KBM-7 (cell line): ENCODE measurements at regions of chr5 and their contacts with region 1.

Region 1: DNA sequence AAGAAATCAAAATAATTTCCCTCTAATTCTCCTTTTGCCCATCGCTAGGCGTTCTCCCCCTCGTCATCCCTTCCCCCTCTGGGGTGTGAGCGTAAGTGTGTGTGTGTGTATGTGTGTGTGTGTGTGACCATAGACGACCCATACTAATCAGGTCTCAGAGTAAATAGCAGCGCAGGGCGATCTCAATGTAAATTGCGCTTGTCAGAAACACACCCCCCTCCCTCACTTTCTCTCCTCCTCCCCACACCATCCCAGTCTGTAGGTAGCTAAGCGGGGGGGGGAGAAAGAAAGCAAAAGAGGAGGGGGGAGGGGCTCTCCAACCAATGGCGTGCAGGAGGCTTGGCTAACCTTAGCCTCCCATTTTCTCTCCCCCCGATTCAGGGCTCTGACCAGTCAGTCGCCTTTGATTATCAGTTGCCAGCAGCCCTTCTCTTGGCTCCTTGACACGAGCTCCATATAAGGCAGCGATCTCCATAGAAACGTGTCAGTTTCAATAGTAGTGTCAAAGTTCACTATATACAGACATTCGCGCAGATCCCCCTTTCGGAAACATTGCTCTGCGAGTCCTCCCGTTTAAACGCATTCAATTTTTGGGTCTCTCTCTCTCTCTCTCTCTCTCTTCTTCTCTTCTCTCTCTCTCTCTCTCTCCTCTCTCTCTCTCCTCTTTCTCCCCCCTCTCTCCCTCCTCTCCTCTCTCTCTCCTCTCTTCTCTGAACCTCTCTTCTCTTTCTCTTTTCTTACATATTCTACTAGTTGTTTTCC is at the start of gene NR2F1:
- DNase-seq: peak; percentile 91

Region 2: DNA sequence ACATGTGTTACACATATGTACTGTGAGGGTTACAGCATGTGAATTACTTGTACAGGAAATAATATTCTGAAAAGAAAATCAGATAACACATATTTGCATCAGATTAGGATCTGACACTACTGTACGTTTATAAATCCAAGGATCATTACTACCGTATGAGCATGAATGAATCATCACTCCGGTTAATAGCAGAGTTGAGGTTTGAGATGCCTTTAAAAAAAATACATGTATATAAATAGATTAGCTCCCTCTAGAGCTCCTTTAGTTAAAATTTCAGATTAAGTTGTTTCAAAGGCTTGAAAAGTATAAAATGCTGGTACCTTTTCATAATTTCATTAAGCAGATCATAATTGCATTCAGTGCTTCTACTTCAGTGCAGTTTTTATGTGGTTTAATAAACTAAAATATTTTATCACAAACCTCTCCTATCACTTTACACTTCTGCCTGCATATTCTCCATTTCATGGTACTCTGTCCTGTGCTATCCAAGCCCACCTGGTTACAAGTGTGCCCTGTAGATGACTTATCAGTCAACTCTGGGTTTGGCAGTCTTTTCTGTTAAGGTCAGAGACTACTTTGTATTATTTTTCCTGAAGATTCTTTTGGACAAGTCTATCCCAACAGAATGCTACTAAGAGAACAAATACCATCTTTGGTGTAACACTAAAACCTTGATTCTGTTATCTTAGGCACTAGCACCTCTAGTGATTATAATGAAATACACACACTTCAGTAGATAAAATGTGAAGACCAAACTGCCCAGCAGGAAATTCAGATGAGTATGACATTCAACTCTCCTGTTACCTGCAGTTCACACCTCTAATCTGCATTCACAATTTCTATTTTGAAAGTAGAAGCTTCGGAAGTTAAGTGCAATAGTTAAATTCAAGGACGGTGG is 206.6 kb after region 1 on chr5:
- in situ Hi-C with region 1: loop called (anchors 25 kb)
- DNase-seq: no peak

Region 3: DNA sequence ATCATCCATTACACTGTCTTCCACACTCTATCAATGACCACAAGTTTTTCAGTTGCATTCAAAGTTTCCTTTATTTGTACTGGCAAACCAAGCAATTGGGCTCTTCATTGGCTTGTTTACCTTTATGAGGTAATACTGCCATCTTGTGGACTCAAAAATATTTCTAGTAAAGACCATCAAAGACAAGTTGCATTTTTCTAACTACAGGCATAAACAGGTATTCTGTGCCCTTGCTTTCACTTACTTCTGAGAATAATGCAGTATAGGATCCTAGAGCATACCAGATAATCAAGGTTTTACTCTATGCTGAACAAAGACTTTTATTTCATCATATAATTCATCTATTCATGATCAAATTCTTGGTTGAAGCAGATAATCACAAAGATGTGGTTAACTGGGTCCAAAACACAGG is 332.3 kb after region 1 on chr5:
- in situ Hi-C with region 1: loop called (anchors 25 kb)
- DNase-seq: peak; percentile 63

Region 4: GRCh38 chr5:93967923-93968322 is 385.1 kb after region 1 on chr5:
- in situ Hi-C with region 1: no loop called
- DNase-seq: no peak

Region 5: DNA sequence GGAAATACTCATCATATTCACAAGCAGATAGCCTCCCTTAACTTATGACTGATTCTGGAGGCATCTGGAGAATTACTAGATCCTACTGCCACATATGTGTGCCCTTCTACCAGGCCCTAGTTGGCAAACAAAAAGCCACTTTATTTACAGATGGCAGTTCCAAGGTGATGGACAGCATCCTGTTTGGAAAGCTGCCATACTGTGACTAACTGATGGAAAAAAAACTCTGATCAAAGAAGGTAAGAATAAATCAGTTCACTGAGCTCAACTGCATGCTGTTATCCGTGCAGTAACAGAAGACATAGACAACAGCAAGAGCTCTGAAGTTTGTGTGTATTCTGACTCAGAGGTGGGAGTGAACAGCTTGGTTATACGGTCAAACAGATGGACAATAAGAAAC is 438.4 kb after region 1 on chr5:
- in situ Hi-C with region 1: no loop called
- DNase-seq: no peak